ENCODE measurements at regions of chr12 and their contacts with region 1.

Region 1: DNA sequence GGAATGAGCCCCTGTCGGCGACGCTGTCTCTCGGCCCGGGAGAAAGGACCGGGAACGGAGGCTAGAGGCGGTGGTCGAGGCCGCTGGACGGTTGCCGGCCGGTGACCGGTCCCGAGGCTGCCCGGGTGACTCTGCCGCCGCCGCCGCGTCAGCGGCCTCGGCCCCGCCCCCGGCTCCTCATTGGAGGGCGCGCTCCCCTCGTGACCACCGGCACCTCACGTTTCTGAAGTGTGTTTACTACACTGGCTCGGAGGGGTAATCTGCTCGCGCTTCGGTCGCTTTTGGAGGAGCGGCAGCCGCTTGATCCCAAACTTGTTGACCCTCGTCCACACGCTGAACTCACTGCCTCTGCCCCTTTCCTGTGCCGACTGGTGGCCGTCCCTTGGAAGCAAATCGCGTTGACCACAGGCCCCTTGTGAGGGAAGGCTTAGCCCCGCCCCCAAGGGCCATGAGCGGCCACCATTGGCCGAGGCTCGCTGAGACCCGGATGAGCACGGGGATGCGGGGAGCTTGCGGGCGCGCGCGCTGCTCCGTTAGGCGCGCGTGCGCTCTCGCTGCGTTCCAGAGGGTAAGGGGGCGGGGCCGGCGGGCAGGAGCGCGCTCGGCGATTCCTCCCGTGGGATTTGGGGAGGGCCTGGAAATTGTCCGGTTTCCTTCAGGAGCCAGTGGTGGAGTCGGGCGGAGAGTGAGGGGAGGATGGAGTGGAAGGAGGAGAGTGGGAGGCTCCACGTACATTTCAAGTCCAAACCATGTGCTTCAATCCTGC is at the start of gene CRY1:
- DNase-seq: peak; percentile 96
- ATAC-seq: peak; percentile 83
- H3K4me3 Mint-ChIP-seq: no peak within 1 kb of the TSS
- H3K27ac Mint-ChIP-seq: peak within 1 kb of the TSS; percentile 99
- H3K4me1 Mint-ChIP-seq: peaks cover 3% of the 10 kb centered on the region
- H3K27me3 Mint-ChIP-seq: peaks cover 7% of the 10 kb centered on the region
- total RNA-seq, gene CRY1: 14.8 to 17.7 TPM

Region 2: DNA sequence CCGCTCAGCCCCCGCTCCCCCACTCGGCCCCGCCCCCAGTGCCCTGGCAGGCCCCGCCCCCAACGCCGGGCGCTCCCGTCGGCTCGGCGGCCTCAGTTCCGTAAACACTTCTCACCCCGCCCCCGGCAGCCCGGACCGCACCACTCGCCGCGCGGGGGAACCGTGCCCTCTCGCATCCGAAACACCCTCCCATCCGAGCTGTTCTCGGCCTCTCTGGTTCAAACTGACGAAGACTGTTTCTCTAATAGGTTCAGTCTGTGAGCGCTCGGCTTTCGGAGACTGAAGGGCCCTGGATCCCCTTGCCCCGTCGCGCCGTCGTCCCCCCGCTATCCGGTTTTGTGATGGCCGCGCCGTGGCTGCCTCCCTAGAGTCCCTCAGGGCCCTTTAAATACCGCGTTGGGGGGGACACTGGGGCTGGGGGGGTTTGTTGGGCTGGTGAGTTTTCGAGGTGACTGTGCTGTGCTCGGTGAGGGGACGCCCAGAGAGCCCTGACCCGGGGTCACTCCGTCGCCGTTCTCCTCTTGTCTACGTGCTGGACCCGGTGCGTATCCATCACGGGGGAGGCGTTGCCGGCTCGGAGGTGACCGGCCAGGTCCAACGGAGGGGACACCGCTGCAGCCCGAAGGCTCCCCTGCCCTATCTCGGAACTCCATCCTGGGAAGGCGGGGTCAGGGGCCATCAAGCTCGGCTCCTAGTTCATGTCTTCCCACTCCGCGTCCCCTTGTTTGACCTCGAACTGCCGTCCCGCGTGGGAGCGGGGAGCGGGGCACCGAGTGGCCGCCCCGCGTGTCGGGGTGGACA is 791.0 kb before region 1 on chr12 and contains the start of gene TCP11L2:
- CTCF ChIA-PET with region 1: no interaction called
- POLR2A ChIA-PET with region 1: no interaction called
- intact Hi-C with region 1: loop called (anchors 1 to 5 kb)
- DNase-seq: peak; percentile 94
- ATAC-seq: peak; percentile 67
- H3K4me3 Mint-ChIP-seq: peak within 1 kb of the TSS; percentile 78
- H3K27ac Mint-ChIP-seq: peak within 1 kb of the TSS; percentile 99
- H3K4me1 Mint-ChIP-seq: peaks cover 59% of the 10 kb centered on the region
- H3K27me3 Mint-ChIP-seq: no peaks in the 10 kb centered on the region
- total RNA-seq, gene TCP11L2: 8.6 to 11.8 TPM

Region 3: GRCh38 chr12:106955377-106956047 is 138.1 kb before region 1 on chr12 and contains the start of gene TMEM263:
- CTCF ChIA-PET with region 1: interaction called, 4 read pairs
- POLR2A ChIA-PET with region 1: no interaction called
- intact Hi-C with region 1: loop called (anchors 1 to 2 kb)
- DNase-seq: peak; percentile 94
- ATAC-seq: peak; percentile 81
- H3K4me3 Mint-ChIP-seq: peak within 1 kb of the TSS; percentile 100
- H3K27ac Mint-ChIP-seq: peak within 1 kb of the TSS; percentile 98
- H3K4me1 Mint-ChIP-seq: peaks cover 23% of the 10 kb centered on the region
- H3K27me3 Mint-ChIP-seq: no peaks in the 10 kb centered on the region
- total RNA-seq, gene TMEM263: 38.9 to 43.0 TPM

Region 4: GRCh38 chr12:107079172-107080011 is 14.2 kb before region 1 on chr12:
- CTCF ChIA-PET with region 1: interaction called, 25 read pairs
- POLR2A ChIA-PET with region 1: no interaction called
- intact Hi-C with region 1: no loop called
- DNase-seq: peak; percentile 13
- ATAC-seq: peak; percentile 96
- H3K4me3 Mint-ChIP-seq: no peak overlapping the region
- H3K27ac Mint-ChIP-seq: no peak overlapping the region
- H3K4me1 Mint-ChIP-seq: peaks cover 12% of the 10 kb centered on the region
- H3K27me3 Mint-ChIP-seq: no peaks in the 10 kb centered on the region

Region 5: GRCh38 chr12:107328442-107329133 is 235.0 kb after region 1 on chr12:
- CTCF ChIA-PET with region 1: no interaction called
- POLR2A ChIA-PET with region 1: no interaction called
- intact Hi-C with region 1: loop called in 1 of 2 experiments (anchors 2 kb)
- DNase-seq: peak; percentile 49
- ATAC-seq: peak; percentile 10
- H3K4me3 Mint-ChIP-seq: no peak overlapping the region
- H3K27ac Mint-ChIP-seq: no peak overlapping the region
- H3K4me1 Mint-ChIP-seq: peaks cover 77% of the 10 kb centered on the region
- H3K27me3 Mint-ChIP-seq: peaks cover 2% of the 10 kb centered on the region

Region 6: GRCh38 chr12:107760809-107761501 is 667.4 kb after region 1 on chr12 and contains the start of gene PRDM4:
- CTCF ChIA-PET with region 1: no interaction called
- POLR2A ChIA-PET with region 1: no interaction called
- intact Hi-C with region 1: loop called in 1 of 2 experiments (anchors 1 kb)
- DNase-seq: peak; percentile 95
- ATAC-seq: peak; percentile 93
- H3K4me3 Mint-ChIP-seq: peak within 1 kb of the TSS; percentile 92
- H3K27ac Mint-ChIP-seq: peak within 1 kb of the TSS; percentile 91
- H3K4me1 Mint-ChIP-seq: peaks cover 27% of the 10 kb centered on the region
- H3K27me3 Mint-ChIP-seq: no peaks in the 10 kb centered on the region
- total RNA-seq, gene PRDM4: 27.5 to 29.7 TPM